Left lung (tissue), 14 donors: ENCODE measurements at regions of chr5 and their contacts with region 1.

Region 1: GRCh38 chr5:91311697-91312501 is 71.2 kb downstream of the ARRDC3 start:
- DNase-seq: peak; percentile 51 to 85 (median 84)
- ATAC-seq: peak; percentile 95
- H3K4me3 ChIP-seq: peak overlapping the region in 1 of 2 donors; percentile 42
- H3K27ac ChIP-seq: peak overlapping the region; percentile 90 to 93
- H3K4me1 ChIP-seq: peaks cover 20 to 83% of the 10 kb centered on the region in 2 donors
- H3K27me3 ChIP-seq: no peaks in the 10 kb centered on the region
- CTCF ChIP-seq: peak in 1 of 2 donors; percentile 17

Region 2: DNA sequence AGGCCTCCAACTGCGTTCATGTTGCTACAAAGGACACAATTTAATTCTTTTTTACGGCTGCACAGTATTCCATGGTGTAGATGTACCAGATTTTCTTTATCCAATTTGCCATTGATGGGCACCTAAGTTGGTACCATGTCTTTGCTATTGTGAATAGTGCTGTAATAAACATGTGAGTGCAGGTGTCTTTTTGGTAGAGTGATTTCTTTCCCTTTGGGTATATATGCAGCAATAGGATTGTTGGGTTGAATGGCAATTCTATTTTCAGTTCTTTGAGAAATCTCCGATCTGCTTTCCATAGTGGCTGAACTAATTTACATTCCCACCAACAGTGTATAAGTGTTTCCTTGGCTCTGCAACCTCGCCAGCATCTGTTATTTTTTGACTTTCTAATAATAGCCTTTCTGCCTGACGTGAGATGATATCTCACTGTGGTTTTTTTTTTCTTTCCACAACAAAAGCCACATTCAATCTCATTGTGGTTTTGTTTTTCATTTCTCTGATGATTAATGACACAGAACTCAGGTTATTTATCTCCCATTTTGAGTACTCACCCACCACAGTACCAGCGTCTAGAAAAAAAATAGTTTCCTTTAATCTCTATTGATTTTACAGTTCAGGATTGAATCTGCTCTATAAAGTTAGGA is 49.3 kb after region 1 on chr5:
- intact Hi-C with region 1: loop called in 1 of 2 experiments (anchors 10 kb)
- DNase-seq: no peak
- ATAC-seq: no peak
- H3K4me3 ChIP-seq: no peak overlapping the region
- H3K27ac ChIP-seq: no peak overlapping the region
- H3K4me1 ChIP-seq: peaks cover 0 to 11% of the 10 kb centered on the region in 2 donors
- H3K27me3 ChIP-seq: no peaks in the 10 kb centered on the region
- CTCF ChIP-seq: no peak